B cell (primary cell): ENCODE measurements at regions of chr7 and their contacts with region 1.

Region 1: GRCh38 chr7:1086588-1087464 is 1.1 kb upstream of the GPER1 start:
- DNase-seq: peak; percentile 93
- ATAC-seq: peak; percentile 93
- H3K4me3 ChIP-seq: peak overlapping the region in 4 of 5 experiments; percentile 27 to 53 (median 42)
- H3K4me3 Mint-ChIP-seq: peak overlapping the region; percentile 94
- H3K27ac ChIP-seq: peak overlapping the region; percentile 57 to 73
- H3K27ac Mint-ChIP-seq: peak overlapping the region; percentile 82
- H3K4me1 ChIP-seq: peaks cover 20 to 39% of the 10 kb centered on the region in 2 donors
- H3K4me1 Mint-ChIP-seq: peaks cover 42% of the 10 kb centered on the region
- H3K27me3 ChIP-seq: no peaks in the 10 kb centered on the region
- H3K27me3 Mint-ChIP-seq: no peaks in the 10 kb centered on the region
- CTCF ChIP-seq: peak; percentile 98

Region 2: GRCh38 chr7:732094-732541 is 354.7 kb before region 1 on chr7:
- CTCF ChIA-PET with region 1: no interaction called
- POLR2A ChIA-PET with region 1: interaction called, 11 read pairs
- intact Hi-C with region 1: no loop called
- DNase-seq: no peak
- ATAC-seq: no peak
- H3K4me3 ChIP-seq: no peak overlapping the region
- H3K4me3 Mint-ChIP-seq: no peak overlapping the region
- H3K27ac ChIP-seq: no peak overlapping the region
- H3K27ac Mint-ChIP-seq: no peak overlapping the region
- H3K4me1 ChIP-seq: peaks cover 7 to 10% of the 10 kb centered on the region in 2 donors
- H3K4me1 Mint-ChIP-seq: peaks cover 12% of the 10 kb centered on the region
- H3K27me3 ChIP-seq: no peaks in the 10 kb centered on the region
- H3K27me3 Mint-ChIP-seq: no peaks in the 10 kb centered on the region
- CTCF ChIP-seq: no peak

Region 3: DNA sequence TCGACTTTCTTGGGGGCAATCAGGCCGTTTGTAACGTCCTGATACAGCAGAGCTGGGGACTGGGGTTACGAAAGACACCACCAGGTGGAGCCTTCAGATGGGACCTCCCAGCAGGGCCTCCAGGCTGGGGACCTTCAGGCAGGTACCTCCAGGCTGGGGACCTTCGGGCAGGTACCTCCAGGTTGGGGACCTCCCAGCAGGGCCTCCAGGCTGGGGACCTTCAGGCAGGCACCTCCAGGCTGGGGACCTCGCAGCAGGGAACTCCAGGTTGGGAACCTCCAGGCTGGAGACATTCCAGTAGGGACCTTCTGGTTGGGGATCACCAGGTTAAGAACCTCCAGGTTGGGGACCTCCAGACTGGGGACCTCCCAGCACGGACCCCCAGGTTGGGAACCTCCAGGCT is 66.0 kb before region 1 on chr7:
- CTCF ChIA-PET with region 1: interaction called, 9 read pairs
- POLR2A ChIA-PET with region 1: interaction called, 10 read pairs
- intact Hi-C with region 1: loop called (anchors 1 kb)
- DNase-seq: peak; percentile 49
- ATAC-seq: no peak
- H3K4me3 ChIP-seq: no peak overlapping the region
- H3K4me3 Mint-ChIP-seq: no peak overlapping the region
- H3K27ac ChIP-seq: no peak overlapping the region
- H3K27ac Mint-ChIP-seq: no peak overlapping the region
- H3K4me1 ChIP-seq: peaks cover 50 to 62% of the 10 kb centered on the region in 2 donors
- H3K4me1 Mint-ChIP-seq: peaks cover 67% of the 10 kb centered on the region
- H3K27me3 ChIP-seq: peaks cover 0 to 2% (median 0%) of the 10 kb centered on the region in 4 experiments
- H3K27me3 Mint-ChIP-seq: no peaks in the 10 kb centered on the region
- CTCF ChIP-seq: peak; percentile 48

Region 4: DNA sequence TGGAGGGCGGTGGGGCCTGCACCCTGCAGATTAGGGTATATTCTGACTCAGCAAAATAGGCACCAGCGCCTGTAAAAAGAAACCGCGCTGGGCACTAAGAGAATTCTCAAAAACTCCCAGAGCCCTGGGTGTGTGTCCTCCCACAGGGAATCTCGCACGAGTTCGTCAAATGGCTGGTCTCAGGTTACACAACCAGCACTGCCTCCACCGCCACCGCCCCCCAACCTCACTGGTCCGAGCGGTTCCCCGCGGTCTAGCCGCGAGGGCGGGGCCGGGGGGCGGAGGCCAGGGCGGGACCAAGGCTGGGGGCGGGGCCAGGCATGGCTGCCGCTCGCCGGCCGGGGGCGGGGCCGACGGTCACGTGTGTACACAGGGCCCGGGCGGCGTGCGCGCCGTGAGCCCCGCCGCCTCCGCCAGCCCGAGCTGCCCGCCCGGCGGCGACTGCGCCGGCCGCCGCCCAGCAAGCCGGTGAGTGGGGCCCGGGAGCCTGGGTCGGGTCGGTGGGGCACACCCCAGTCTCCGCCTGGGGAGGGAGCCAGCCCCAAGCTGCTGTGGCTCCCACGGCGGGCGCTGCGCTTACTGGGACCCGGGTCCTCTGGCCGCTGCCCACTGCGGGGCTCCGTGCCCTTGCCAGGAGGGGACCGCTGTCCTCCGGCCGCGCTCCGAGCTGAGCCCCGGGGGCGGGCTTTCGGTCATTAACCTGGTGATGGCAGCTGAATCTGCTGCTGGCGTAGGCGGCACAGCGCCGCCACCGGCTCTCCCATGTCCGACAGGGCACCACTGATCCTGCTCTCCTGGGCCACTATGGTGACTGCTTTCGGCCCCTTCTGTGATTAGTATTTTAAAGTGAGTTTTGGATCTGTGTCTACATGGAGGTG is 42.4 kb before region 1 on chr7 and contains the start of gene GPR146:
- CTCF ChIA-PET with region 1: interaction called, 6 read pairs
- POLR2A ChIA-PET with region 1: interaction called, 3 read pairs
- intact Hi-C with region 1: loop called (anchors 1 kb)
- DNase-seq: peak; percentile 91
- ATAC-seq: peak; percentile 95
- H3K4me3 ChIP-seq: peak within 1 kb of the TSS; percentile 11 to 75 (median 63)
- H3K4me3 Mint-ChIP-seq: peak within 1 kb of the TSS; percentile 96
- H3K27ac ChIP-seq: peak within 1 kb of the TSS in 1 of 2 donors; percentile 69
- H3K27ac Mint-ChIP-seq: peak within 1 kb of the TSS; percentile 75
- H3K4me1 ChIP-seq: peaks cover 17 to 20% of the 10 kb centered on the region in 2 donors
- H3K4me1 Mint-ChIP-seq: peaks cover 28% of the 10 kb centered on the region
- H3K27me3 ChIP-seq: peaks cover 0 to 5% (median 1%) of the 10 kb centered on the region in 4 experiments
- H3K27me3 Mint-ChIP-seq: peaks cover 3% of the 10 kb centered on the region
- CTCF ChIP-seq: peak; percentile 80
- total RNA-seq, gene GPR146: 44.6 and 45.4 TPM in 2 replicates

Region 5: DNA sequence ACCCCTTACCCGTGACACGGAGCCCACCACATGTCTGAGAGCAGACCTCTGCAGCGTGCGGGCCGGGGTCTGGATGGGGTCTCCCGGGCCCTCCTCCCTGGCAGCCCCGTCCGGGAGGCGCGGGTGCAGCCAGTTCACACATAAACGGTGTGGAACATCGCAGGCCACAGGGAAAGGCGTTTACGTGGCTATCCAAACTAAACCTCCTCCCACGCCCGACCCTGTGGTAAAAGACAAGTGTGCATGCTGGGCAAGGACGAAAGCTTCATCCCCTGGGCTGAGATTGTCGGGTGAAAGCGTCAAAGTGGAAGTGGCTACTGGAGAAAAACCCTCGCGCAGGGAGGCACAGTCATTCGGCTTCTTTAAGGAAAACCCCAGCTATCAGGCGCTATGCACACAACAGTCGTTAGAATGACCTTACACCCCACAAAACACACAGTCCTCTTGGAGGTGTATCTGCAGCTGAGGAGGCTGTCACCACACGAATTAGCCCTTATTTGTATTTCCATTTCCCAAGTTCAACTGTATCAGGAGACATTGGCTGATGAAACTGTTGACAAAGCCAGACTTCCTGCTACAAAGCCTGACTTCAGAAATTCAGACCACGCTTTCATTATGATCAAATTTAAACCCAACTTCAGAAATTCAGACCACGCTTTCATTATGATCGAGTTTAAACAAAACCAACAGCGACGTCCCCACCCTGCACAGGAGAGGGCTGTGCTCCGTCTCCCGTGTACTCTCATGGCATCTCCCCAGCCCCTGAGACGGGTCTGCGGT is 16.4 kb after region 1 on chr7:
- CTCF ChIA-PET with region 1: interaction called, 17 read pairs
- POLR2A ChIA-PET with region 1: interaction called, 7 read pairs
- intact Hi-C with region 1: loop called (anchors 2 kb)
- DNase-seq: peak; percentile 51
- ATAC-seq: peak; percentile 28
- H3K4me3 ChIP-seq: peak overlapping the region in 3 of 5 experiments; percentile 0 to 39 (median 20)
- H3K4me3 Mint-ChIP-seq: peak overlapping the region; percentile 84
- H3K27ac ChIP-seq: no peak overlapping the region
- H3K27ac Mint-ChIP-seq: no peak overlapping the region
- H3K4me1 ChIP-seq: peaks cover 7 to 31% of the 10 kb centered on the region in 2 donors
- H3K4me1 Mint-ChIP-seq: peaks cover 35% of the 10 kb centered on the region
- H3K27me3 ChIP-seq: peaks cover 0 to 6% (median 3%) of the 10 kb centered on the region in 4 experiments
- H3K27me3 Mint-ChIP-seq: peaks cover 7% of the 10 kb centered on the region
- CTCF ChIP-seq: no peak

Region 6: DNA sequence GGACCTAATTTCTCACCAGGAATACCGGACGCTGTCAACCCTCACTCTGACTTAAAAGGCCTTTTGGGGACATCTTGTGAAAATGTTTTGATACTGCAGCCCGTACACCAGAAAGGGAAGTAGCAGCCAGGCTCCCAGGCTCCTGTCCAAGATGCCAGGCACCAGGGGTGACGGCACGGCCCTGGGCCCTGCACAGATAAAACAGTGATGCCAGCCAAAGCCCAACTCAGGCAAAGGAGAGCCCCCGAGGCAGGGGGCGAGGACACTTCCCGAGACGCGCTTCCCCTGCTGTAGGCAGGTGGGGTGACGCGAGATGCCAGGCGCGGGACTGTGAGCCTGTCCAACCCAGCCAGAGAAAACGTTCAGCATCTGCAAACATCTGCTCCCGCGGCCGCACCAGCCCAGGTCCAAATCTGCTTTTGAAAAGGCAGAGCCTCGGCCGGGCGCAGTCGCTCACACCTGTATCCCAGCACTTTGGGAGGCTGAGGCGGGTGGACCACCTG is 57.5 kb after region 1 on chr7:
- CTCF ChIA-PET with region 1: interaction called, 21 read pairs
- POLR2A ChIA-PET with region 1: no interaction called
- intact Hi-C with region 1: loop called (anchors 1 kb)
- DNase-seq: peak; percentile 65
- ATAC-seq: peak; percentile 42
- H3K4me3 ChIP-seq: no peak overlapping the region
- H3K4me3 Mint-ChIP-seq: peak overlapping the region; percentile 75
- H3K27ac ChIP-seq: no peak overlapping the region
- H3K27ac Mint-ChIP-seq: peak overlapping the region; percentile 85
- H3K4me1 ChIP-seq: peaks cover 15 to 33% of the 10 kb centered on the region in 2 donors
- H3K4me1 Mint-ChIP-seq: peaks cover 32% of the 10 kb centered on the region
- H3K27me3 ChIP-seq: no peaks in the 10 kb centered on the region
- H3K27me3 Mint-ChIP-seq: no peaks in the 10 kb centered on the region
- CTCF ChIP-seq: peak; percentile 27